ENCODE measurements at regions of chr15 and their contacts with region 1.

Region 1: GRCh38 chr15:65638681-65639089 is 16.9 kb downstream of the SLC24A1 start:
- DNase-seq: peak in 11 of 14 experiments; percentile 4 to 84 (median 18)
- ATAC-seq: peak; percentile 91
- H3K4me3 ChIP-seq: no peak overlapping the region
- H3K4me3 Mint-ChIP-seq: no peak overlapping the region
- H3K27ac ChIP-seq: no peak overlapping the region
- H3K27ac Mint-ChIP-seq: no peak overlapping the region
- H3K4me1 ChIP-seq: peaks cover 6% of the 10 kb centered on the region
- H3K4me1 Mint-ChIP-seq: peaks cover 7% of the 10 kb centered on the region
- H3K27me3 ChIP-seq: no peaks in the 10 kb centered on the region
- H3K27me3 Mint-ChIP-seq: no peaks in the 10 kb centered on the region
- CTCF ChIP-seq: peak; percentile 82

Region 2: GRCh38 chr15:65832549-65833364 is 194.1 kb after region 1 on chr15:
- CTCF ChIA-PET with region 1: no interaction called
- POLR2A ChIA-PET with region 1: no interaction called
- intact Hi-C with region 1: loop called in 1 of 2 experiments (anchors 5 kb)
- DNase-seq: peak in 13 of 14 experiments; percentile 18 to 87 (median 45)
- ATAC-seq: peak; percentile 52
- H3K4me3 ChIP-seq: peak overlapping the region; percentile 2
- H3K4me3 Mint-ChIP-seq: peak overlapping the region; percentile 82
- H3K27ac ChIP-seq: peak overlapping the region; percentile 71 to 80
- H3K27ac Mint-ChIP-seq: peak overlapping the region; percentile 95
- H3K4me1 ChIP-seq: peaks cover 64% of the 10 kb centered on the region
- H3K4me1 Mint-ChIP-seq: peaks cover 59% of the 10 kb centered on the region
- H3K27me3 ChIP-seq: no peaks in the 10 kb centered on the region
- H3K27me3 Mint-ChIP-seq: no peaks in the 10 kb centered on the region
- CTCF ChIP-seq: no peak

Region 3: GRCh38 chr15:65862682-65863081 is 224.0 kb after region 1 on chr15:
- CTCF ChIA-PET with region 1: no interaction called
- POLR2A ChIA-PET with region 1: no interaction called
- intact Hi-C with region 1: loop called (anchors 1 to 2 kb)
- DNase-seq: peak in 13 of 14 experiments; percentile 9 to 82 (median 38)
- ATAC-seq: peak; percentile 99
- H3K4me3 ChIP-seq: no peak overlapping the region
- H3K4me3 Mint-ChIP-seq: no peak overlapping the region
- H3K27ac ChIP-seq: no peak overlapping the region
- H3K27ac Mint-ChIP-seq: no peak overlapping the region
- H3K4me1 ChIP-seq: peaks cover 3% of the 10 kb centered on the region
- H3K4me1 Mint-ChIP-seq: peaks cover 11% of the 10 kb centered on the region
- H3K27me3 ChIP-seq: no peaks in the 10 kb centered on the region
- H3K27me3 Mint-ChIP-seq: no peaks in the 10 kb centered on the region
- CTCF ChIP-seq: peak; percentile 33

Region 4: DNA sequence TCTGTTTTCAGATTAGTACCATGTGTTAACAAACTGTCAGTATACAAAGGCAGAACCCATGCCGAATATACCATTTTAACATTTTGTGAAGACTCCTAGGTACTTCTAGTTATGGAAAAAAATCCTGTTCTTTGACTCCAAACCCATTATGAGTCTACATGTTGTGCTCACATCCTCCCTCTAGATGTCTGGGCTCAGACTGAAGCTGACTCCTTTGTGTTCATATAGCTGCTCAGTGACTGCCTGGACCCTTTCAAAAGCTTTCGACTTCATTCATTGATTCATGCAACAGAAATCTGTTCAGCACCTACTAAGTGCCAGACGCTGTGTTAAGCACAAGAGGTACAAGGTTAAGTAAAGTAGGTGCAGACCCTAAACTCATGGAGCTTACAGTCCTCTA is 554.4 kb after region 1 on chr15:
- CTCF ChIA-PET with region 1: no interaction called
- POLR2A ChIA-PET with region 1: no interaction called
- intact Hi-C with region 1: loop called (anchors 2 to 5 kb)
- DNase-seq: no peak
- ATAC-seq: no peak
- H3K4me3 ChIP-seq: no peak overlapping the region
- H3K4me3 Mint-ChIP-seq: no peak overlapping the region
- H3K27ac ChIP-seq: no peak overlapping the region
- H3K27ac Mint-ChIP-seq: no peak overlapping the region
- H3K4me1 ChIP-seq: no peaks in the 10 kb centered on the region
- H3K4me1 Mint-ChIP-seq: no peaks in the 10 kb centered on the region
- H3K27me3 ChIP-seq: no peaks in the 10 kb centered on the region
- H3K27me3 Mint-ChIP-seq: peaks cover 9% of the 10 kb centered on the region
- CTCF ChIP-seq: no peak

Region 5: GRCh38 chr15:66472176-66472999 is 833.7 kb after region 1 on chr15:
- CTCF ChIA-PET with region 1: no interaction called
- POLR2A ChIA-PET with region 1: no interaction called
- intact Hi-C with region 1: loop called in 1 of 2 experiments (anchors 1 kb)
- DNase-seq: peak; percentile 7 to 83 (median 31)
- ATAC-seq: peak; percentile 94
- H3K4me3 ChIP-seq: peak overlapping the region; percentile 33
- H3K4me3 Mint-ChIP-seq: peak overlapping the region; percentile 69
- H3K27ac ChIP-seq: peak overlapping the region; percentile 25 to 48
- H3K27ac Mint-ChIP-seq: peak overlapping the region; percentile 88
- H3K4me1 ChIP-seq: peaks cover 23% of the 10 kb centered on the region
- H3K4me1 Mint-ChIP-seq: peaks cover 58% of the 10 kb centered on the region
- H3K27me3 ChIP-seq: no peaks in the 10 kb centered on the region
- H3K27me3 Mint-ChIP-seq: no peaks in the 10 kb centered on the region
- CTCF ChIP-seq: no peak

Measured in CD4-positive, alpha-beta T cell (primary cell).